ENCODE measurements at regions of chr9 and their contacts with region 1.

Region 1: DNA sequence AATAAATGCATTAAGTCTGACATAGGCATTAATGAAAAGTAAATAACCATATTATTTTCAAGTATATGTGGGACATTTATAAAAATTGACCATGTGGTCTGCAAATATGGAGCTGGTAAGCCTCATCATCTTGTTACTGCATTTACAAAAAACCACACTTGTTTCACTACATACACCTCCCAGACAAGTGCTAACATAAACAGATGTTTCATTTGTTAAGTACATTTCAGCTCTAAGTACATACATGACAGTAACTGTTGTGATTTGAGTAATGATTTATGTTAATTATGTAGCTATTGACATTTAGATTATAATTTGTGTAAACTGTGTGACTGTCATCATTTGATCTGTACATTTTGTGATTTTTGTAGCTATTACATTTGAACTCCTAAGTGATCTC is 13.9 kb downstream of the IDNK start:
- DNase-seq: no peak
- H3K4me3 ChIP-seq: no peak overlapping the region
- H3K4me3 Mint-ChIP-seq: no peak overlapping the region
- H3K27ac Mint-ChIP-seq: no peak overlapping the region
- H3K4me1 ChIP-seq: peaks cover 11% of the 10 kb centered on the region; the same call in 1 of the 2 replicates
- H3K4me1 Mint-ChIP-seq: peaks cover 6% of the 10 kb centered on the region
- H3K27me3 ChIP-seq: no peaks in the 10 kb centered on the region
- H3K27me3 Mint-ChIP-seq: no peaks in the 10 kb centered on the region
- CTCF ChIP-seq: no peak

Region 2: DNA sequence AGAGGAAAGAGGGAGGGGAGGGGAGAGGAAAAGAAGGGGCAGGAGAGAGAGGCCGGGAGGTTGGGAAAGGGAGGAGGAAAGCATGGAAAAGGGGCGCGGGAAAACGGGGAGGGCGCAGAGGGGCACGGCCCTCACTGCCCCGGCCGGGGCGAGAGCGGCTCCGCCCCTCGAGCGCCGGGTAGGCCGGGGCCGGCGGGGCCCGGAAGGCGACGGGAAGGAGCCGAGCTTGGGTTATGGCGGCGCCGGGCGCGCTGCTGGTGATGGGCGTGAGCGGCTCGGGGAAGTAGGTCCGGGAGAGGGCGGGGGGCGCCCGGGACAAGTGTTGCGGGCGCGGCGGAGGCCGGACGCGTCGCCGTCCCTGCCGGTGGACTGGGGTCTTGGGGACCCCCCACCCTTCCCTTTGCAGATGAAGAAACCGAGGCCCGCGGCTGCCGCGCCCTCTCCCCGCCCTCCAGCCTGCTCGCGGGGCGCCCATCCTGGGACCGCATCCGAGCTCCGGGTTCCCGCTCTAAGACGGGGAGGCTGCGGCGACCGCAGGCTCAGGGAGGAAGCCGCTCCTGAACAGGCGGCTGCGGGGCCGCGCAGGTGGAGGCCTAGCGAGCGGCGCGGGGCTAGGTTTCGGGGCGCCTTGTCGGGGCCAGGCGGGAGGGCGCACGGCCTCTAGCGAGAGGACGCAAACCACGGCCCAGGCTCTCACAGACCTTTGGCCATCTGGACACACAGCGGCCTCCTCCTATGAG is 13.7 kb before region 1 on chr9 and contains the start of gene IDNK:
- CTCF ChIA-PET with region 1: interaction called, 4 read pairs
- POLR2A ChIA-PET with region 1: interaction called, 5 read pairs
- intact Hi-C with region 1: loop called (anchors 1 kb)
- DNase-seq: peak; percentile 59 to 77
- H3K4me3 ChIP-seq: peak within 1 kb of the TSS; percentile 65
- H3K4me3 Mint-ChIP-seq: peak within 1 kb of the TSS; percentile 84
- H3K27ac Mint-ChIP-seq: peak within 1 kb of the TSS; percentile 83
- H3K4me1 ChIP-seq: peaks cover 14% of the 10 kb centered on the region
- H3K4me1 Mint-ChIP-seq: peaks cover 20% of the 10 kb centered on the region
- H3K27me3 ChIP-seq: no peaks in the 10 kb centered on the region
- H3K27me3 Mint-ChIP-seq: no peaks in the 10 kb centered on the region
- CTCF ChIP-seq: no peak
- total RNA-seq, gene IDNK: 4.3 and 5.1 TPM in 2 replicates

Region 3: GRCh38 chr9:83688921-83689320 is 52.1 kb after region 1 on chr9:
- CTCF ChIA-PET with region 1: no interaction called
- POLR2A ChIA-PET with region 1: no interaction called
- intact Hi-C with region 1: no loop called
- DNase-seq: no peak
- H3K4me3 ChIP-seq: no peak overlapping the region
- H3K4me3 Mint-ChIP-seq: no peak overlapping the region
- H3K27ac Mint-ChIP-seq: no peak overlapping the region
- H3K4me1 ChIP-seq: no peaks in the 10 kb centered on the region
- H3K4me1 Mint-ChIP-seq: no peaks in the 10 kb centered on the region
- H3K27me3 ChIP-seq: no peaks in the 10 kb centered on the region
- H3K27me3 Mint-ChIP-seq: no peaks in the 10 kb centered on the region
- CTCF ChIP-seq: no peak